Calu3 (cell line): ENCODE measurements at regions of chr7 and their contacts with region 1.

Region 1: GRCh38 chr7:90715067-90715466 is 118.9 kb downstream of the CDK14 start:
- DNase-seq: no peak
- H3K4me3 Mint-ChIP-seq: no peak overlapping the region
- H3K27ac Mint-ChIP-seq: no peak overlapping the region
- H3K4me1 Mint-ChIP-seq: peaks cover 6% of the 10 kb centered on the region
- H3K27me3 Mint-ChIP-seq: no peaks in the 10 kb centered on the region
- CTCF ChIP-seq: no peak

Region 2: DNA sequence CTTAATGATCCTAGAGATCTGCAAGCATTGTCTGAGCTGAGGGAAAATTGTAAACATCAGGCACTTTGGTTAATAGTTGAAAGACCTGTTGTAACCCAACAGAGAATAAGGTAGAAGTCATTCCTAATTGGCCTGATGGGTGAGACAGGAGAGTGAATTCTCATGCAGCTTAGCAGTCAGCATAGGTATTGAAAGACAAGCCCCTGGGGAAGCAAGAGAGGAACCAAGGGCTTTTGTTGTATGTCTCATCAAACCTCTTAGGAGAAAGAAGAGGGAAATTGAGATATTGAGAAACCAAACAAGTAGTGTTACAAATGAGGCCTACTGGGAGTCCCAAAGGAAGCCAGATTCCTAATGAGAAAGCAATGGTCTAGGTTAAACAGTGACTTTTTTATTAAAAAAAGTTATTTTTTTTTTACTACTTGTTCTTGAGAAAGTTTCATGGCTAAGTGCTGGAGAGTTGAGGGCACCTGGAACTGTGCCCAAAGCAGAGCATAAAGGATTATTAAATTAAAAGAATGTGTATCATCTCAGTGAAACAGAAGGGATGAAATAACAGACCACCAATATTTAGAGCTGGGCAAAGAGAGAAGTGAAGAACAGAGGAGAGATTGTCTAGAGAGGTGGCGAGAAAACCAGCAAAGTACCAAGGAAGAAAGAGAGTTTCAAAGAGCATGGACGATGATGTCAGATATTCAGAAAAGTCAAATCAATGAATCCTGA is 49.9 kb after region 1 on chr7:
- CTCF ChIA-PET with region 1: no interaction called
- intact Hi-C with region 1: loop called (anchors 2 kb)
- DNase-seq: no peak
- H3K4me3 Mint-ChIP-seq: no peak overlapping the region
- H3K27ac Mint-ChIP-seq: peak overlapping the region; percentile 48
- H3K4me1 Mint-ChIP-seq: peaks cover 45% of the 10 kb centered on the region
- H3K27me3 Mint-ChIP-seq: no peaks in the 10 kb centered on the region
- CTCF ChIP-seq: no peak

Region 3: GRCh38 chr7:90958647-90959046 is 243.6 kb after region 1 on chr7:
- CTCF ChIA-PET with region 1: no interaction called
- intact Hi-C with region 1: no loop called
- DNase-seq: no peak
- H3K4me3 Mint-ChIP-seq: no peak overlapping the region
- H3K27ac Mint-ChIP-seq: no peak overlapping the region
- H3K4me1 Mint-ChIP-seq: no peaks in the 10 kb centered on the region
- H3K27me3 Mint-ChIP-seq: no peaks in the 10 kb centered on the region
- CTCF ChIP-seq: no peak